Panc1 (cell line): ENCODE measurements at regions of chr11 and their contacts with region 1.

Region 1: GRCh38 chr11:117083011-117083935 is 15.0 kb downstream of the SIK3 start:
- DNase-seq: no peak
- ATAC-seq: no peak
- H3K4me3 ChIP-seq: no peak overlapping the region
- H3K27ac ChIP-seq: no peak overlapping the region
- H3K4me1 ChIP-seq: peaks cover 4% of the 10 kb centered on the region
- H3K27me3 ChIP-seq: no peaks in the 10 kb centered on the region
- CTCF ChIP-seq: no peak

Region 2: GRCh38 chr11:116828632-116829524 is 254.4 kb before region 1 on chr11:
- CTCF ChIA-PET with region 1: no interaction called
- POLR2A ChIA-PET with region 1: no interaction called
- in situ Hi-C with region 1: no loop called
- intact Hi-C with region 1: no loop called
- DNase-seq: no peak
- ATAC-seq: no peak
- H3K4me3 ChIP-seq: no peak overlapping the region
- H3K27ac ChIP-seq: no peak overlapping the region
- H3K4me1 ChIP-seq: no peaks in the 10 kb centered on the region
- H3K27me3 ChIP-seq: no peaks in the 10 kb centered on the region
- CTCF ChIP-seq: no peak

Region 3: GRCh38 chr11:117020287-117020686 is 63.0 kb before region 1 on chr11:
- CTCF ChIA-PET with region 1: no interaction called
- POLR2A ChIA-PET with region 1: no interaction called
- in situ Hi-C with region 1: no loop called
- intact Hi-C with region 1: no loop called
- DNase-seq: no peak
- ATAC-seq: no peak
- H3K4me3 ChIP-seq: no peak overlapping the region
- H3K27ac ChIP-seq: no peak overlapping the region
- H3K4me1 ChIP-seq: peaks cover 13% of the 10 kb centered on the region
- H3K27me3 ChIP-seq: no peaks in the 10 kb centered on the region
- CTCF ChIP-seq: no peak

Region 4: DNA sequence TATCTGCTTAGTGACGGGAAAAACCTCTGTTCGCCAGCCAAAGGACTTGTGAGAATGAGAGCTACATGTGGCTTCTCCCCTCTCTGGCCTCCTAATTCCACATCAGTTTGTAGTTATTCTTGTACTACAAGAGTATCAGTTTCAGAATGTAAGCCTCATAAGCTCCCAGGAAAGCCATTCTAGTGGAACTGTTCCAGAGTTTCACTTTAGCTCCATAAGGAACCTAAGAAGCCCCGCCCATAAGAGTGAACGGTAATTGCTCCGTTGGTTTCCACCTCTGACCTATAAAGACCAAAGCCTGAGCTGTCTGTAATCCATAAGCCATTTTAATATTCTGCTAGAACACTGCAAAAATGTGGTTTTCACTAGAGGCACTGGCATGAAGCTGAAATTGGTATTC is 38.1 kb before region 1 on chr11:
- CTCF ChIA-PET with region 1: no interaction called
- POLR2A ChIA-PET with region 1: no interaction called
- in situ Hi-C with region 1: no loop called
- intact Hi-C with region 1: no loop called
- DNase-seq: no peak
- ATAC-seq: no peak
- H3K4me3 ChIP-seq: no peak overlapping the region
- H3K27ac ChIP-seq: no peak overlapping the region
- H3K4me1 ChIP-seq: peaks cover 2% of the 10 kb centered on the region; the same call in 1 of the 2 replicates
- H3K27me3 ChIP-seq: no peaks in the 10 kb centered on the region
- CTCF ChIP-seq: no peak

Region 5: DNA sequence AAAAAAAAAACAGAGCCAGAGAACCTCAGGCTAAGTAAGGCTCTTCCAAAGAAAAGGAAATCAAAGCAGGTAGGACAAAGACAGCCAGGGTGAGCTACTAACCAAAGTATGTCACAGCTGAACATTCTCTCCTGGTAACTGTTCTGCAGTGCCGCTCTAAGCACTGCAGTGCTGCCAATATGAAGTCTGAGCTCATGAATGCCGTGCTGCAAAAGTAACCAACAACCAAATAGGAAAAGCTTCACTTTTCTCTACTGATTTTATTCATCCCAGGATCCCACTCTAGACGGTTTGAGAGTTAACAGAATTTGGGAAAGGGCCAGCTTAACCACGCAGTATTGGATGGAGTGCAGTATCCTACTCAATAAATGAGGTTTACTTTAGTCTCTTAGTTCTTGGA is 11.5 kb after region 1 on chr11:
- CTCF ChIA-PET with region 1: interaction called, 10 read pairs
- POLR2A ChIA-PET with region 1: no interaction called
- in situ Hi-C with region 1: no loop called
- intact Hi-C with region 1: no loop called
- DNase-seq: no peak
- ATAC-seq: no peak
- H3K4me3 ChIP-seq: no peak overlapping the region
- H3K27ac ChIP-seq: 0 out of 2 replicates have a peak overlapping the region, but pooled peaks have one; percentile 2
- H3K4me1 ChIP-seq: peaks cover 35% of the 10 kb centered on the region
- H3K27me3 ChIP-seq: no peaks in the 10 kb centered on the region
- CTCF ChIP-seq: no peak